ENCODE measurements at regions of chr3 and their contacts with region 1.

Region 1: DNA sequence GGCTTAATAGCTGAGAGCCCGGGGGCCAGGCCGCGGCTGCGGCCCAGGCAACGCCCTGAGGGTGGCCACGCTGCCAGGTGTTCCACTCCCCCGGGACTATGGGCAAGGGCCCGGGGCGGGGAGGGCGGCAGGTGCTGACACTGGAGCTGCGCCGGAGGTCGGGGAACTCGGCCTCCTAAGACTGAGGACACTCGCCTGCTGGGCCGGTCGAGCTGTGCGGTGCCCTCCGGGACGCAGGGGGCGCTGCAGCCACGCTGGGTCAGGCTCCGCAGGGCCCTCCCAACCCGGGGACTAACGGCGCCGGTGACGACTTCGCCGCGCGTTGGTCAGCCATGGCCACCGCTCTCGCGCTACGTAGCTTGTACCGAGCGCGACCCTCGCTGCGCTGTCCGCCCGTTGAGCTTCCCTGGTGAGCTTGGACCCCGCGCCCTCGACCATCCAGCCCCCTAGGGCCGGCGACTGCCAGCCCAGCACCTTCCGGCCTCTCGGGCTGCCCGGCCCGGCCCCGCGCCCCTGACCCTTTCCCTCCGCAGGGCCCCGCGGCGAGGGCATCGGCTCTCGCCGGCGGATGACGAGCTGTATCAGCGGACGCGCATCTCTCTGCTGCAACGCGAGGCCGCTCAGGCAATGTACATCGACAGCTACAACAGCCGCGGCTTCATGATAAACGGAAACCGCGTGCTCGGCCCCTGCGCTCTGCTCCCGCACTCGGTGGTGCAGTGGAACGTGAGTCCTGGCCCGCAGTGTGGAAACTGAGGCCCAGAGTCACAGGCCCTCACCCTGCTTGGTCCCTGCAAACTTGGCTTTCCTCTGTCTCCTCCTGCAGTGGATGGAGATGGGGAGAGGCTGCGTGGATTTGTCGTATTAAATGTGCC is at the start of gene NDUFAF3:
- DNase-seq: peak; percentile 95
- ATAC-seq: peak; percentile 74 to 92 (median 79)
- H3K4me3 ChIP-seq: peak within 1 kb of the TSS; percentile 82
- H3K4me3 Mint-ChIP-seq: peak within 1 kb of the TSS; percentile 98
- H3K27ac ChIP-seq: peak within 1 kb of the TSS; percentile 94
- H3K27ac Mint-ChIP-seq: peak within 1 kb of the TSS; percentile 95 to 99
- H3K4me1 ChIP-seq: peaks cover 43% of the 10 kb centered on the region
- H3K4me1 Mint-ChIP-seq: peaks cover 16 to 35% of the 10 kb centered on the region in 2 donors
- H3K27me3 ChIP-seq: no peaks in the 10 kb centered on the region
- H3K27me3 Mint-ChIP-seq: no peaks in the 10 kb centered on the region
- CTCF ChIP-seq: peak; percentile 99
- total RNA-seq, gene NDUFAF3: 51.0 to 72.9 (median 66.1) TPM

Region 2: DNA sequence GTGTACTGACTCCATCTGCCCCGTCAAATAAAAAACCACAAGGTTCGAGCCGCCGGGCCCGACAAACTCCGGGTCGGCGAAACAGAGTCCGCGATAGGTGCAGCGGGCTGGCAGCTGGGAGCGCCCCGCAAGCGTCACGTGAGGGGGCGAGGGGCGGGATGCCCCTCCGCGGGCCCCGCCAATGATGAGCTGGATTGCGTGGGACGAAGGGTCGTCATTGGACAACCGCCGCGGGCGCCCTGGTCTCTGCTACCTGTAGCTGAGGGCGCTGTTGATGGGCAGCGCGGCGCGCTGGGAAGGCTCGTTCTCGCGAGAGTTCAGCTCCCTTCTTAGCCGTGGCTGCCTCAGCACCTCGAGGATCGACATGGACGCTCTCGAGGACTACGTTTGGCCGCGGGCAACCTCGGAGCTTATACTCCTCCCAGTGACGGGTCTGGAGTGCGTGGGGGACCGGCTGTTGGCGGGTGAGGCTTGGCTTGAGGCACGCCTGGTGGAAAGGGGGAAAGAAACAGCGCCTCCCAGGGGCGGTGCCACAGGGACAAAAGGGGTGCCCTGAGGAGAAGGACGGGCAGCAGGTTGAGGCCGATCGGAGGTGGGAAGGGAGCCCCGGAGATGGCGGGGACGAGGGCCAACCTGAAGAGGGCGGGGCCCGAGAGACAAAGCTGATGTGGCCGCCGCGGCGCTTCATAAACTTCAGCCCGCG is 14.8 kb before region 1 on chr3 and contains the start of gene WDR6:
- intact Hi-C with region 1: loop called (anchors 1 kb)
- DNase-seq: peak; percentile 94 to 99
- ATAC-seq: peak; percentile 91 to 98 (median 94)
- H3K4me3 ChIP-seq: peak within 1 kb of the TSS; percentile 96
- H3K4me3 Mint-ChIP-seq: peak within 1 kb of the TSS; percentile 100
- H3K27ac ChIP-seq: peak within 1 kb of the TSS; percentile 95
- H3K27ac Mint-ChIP-seq: peak within 1 kb of the TSS; percentile 98 to 99
- H3K4me1 ChIP-seq: peaks cover 20% of the 10 kb centered on the region
- H3K4me1 Mint-ChIP-seq: peaks cover 21 to 24% of the 10 kb centered on the region in 2 donors
- H3K27me3 ChIP-seq: no peaks in the 10 kb centered on the region
- H3K27me3 Mint-ChIP-seq: no peaks in the 10 kb centered on the region
- CTCF ChIP-seq: peak; percentile 44
- total RNA-seq, gene WDR6: 113 to 167 (median 129) TPM

Measured in natural killer cell (primary cell).